MCF 10A (cell line): ENCODE measurements at regions of chr18 and their contacts with region 1.

Region 1: DNA sequence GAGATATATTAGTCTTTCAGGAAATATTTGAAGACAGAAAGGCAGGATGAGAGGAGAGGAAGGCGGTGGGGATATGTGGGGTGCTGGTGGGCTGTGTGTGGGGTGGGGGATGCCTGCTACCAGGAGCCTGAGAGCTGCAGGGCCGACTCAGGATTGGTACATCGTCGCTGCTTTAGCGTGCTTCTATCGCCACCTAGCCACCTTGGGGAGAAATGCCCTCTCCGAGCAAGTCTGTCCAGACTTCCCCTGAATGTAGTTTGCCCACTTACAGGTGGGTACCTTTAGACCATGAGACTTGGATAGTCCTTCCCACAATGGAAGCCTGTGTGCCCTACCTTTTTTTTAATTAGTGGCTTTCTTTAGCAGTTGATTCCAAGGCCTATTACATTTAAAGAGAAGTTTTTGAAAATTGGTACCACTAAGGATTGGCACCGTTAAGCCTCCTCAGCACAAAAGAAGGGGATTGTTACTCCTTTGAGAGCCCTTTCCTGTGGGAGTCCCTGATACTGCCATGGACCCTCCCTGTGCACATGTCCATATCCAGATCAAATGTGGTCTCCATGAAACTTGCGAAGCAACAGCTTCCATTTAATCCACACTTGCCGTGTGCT is 114.1 kb upstream of the NDUFV2 start:
- DNase-seq: peak; percentile 70
- H3K4me3 Mint-ChIP-seq: no peak overlapping the region
- H3K27ac Mint-ChIP-seq: no peak overlapping the region
- H3K4me1 Mint-ChIP-seq: peaks cover 23% of the 10 kb centered on the region
- H3K27me3 Mint-ChIP-seq: no peaks in the 10 kb centered on the region
- CTCF ChIP-seq: peak; percentile 92

Region 2: GRCh38 chr18:8654503-8655451 is 333.6 kb before region 1 on chr18:
- CTCF ChIA-PET with region 1: interaction called, 94 read pairs
- POLR2A ChIA-PET with region 1: interaction called, 17 read pairs
- intact Hi-C with region 1: loop called (anchors 1 kb)
- DNase-seq: peak; percentile 40
- H3K4me3 Mint-ChIP-seq: no peak overlapping the region
- H3K27ac Mint-ChIP-seq: no peak overlapping the region
- H3K4me1 Mint-ChIP-seq: peaks cover 10% of the 10 kb centered on the region
- H3K27me3 Mint-ChIP-seq: peaks cover 14% of the 10 kb centered on the region
- CTCF ChIP-seq: peak; percentile 71

Region 3: GRCh38 chr18:8673256-8674209 is 314.8 kb before region 1 on chr18:
- CTCF ChIA-PET with region 1: interaction called, 11 read pairs
- POLR2A ChIA-PET with region 1: interaction called, 3 read pairs
- intact Hi-C with region 1: no loop called
- DNase-seq: no peak
- H3K4me3 Mint-ChIP-seq: no peak overlapping the region
- H3K27ac Mint-ChIP-seq: no peak overlapping the region
- H3K4me1 Mint-ChIP-seq: no peaks in the 10 kb centered on the region
- H3K27me3 Mint-ChIP-seq: no peaks in the 10 kb centered on the region
- CTCF ChIP-seq: no peak

Region 4: GRCh38 chr18:8696749-8697211 is 291.6 kb before region 1 on chr18:
- CTCF ChIA-PET with region 1: interaction called, 56 read pairs
- POLR2A ChIA-PET with region 1: interaction called, 4 read pairs
- intact Hi-C with region 1: no loop called
- DNase-seq: peak; percentile 63
- H3K4me3 Mint-ChIP-seq: no peak overlapping the region
- H3K27ac Mint-ChIP-seq: no peak overlapping the region
- H3K4me1 Mint-ChIP-seq: peaks cover 4% of the 10 kb centered on the region
- H3K27me3 Mint-ChIP-seq: no peaks in the 10 kb centered on the region
- CTCF ChIP-seq: peak; percentile 61

Region 5: DNA sequence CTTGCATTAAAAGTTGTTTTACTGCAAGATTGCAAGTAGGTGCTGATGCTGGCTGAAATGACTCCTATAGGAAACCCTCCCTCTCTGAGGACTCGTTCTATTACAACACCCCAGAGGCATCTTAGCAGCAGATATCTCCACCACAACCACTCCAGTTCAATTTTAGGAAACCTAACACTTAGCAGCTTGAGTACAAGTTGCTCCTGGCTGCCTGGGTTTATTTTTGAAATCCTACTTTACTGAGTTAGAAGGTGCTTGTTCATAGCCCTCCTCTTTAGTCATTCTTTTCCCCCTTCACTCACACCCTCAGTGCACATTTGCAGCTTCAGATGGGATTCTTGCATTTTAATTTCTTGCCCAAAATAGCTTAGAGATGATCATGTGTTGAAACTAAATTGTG is 171.6 kb before region 1 on chr18:
- CTCF ChIA-PET with region 1: no interaction called
- POLR2A ChIA-PET with region 1: no interaction called
- intact Hi-C with region 1: no loop called
- DNase-seq: no peak
- H3K4me3 Mint-ChIP-seq: no peak overlapping the region
- H3K27ac Mint-ChIP-seq: no peak overlapping the region
- H3K4me1 Mint-ChIP-seq: peaks cover 20% of the 10 kb centered on the region
- H3K27me3 Mint-ChIP-seq: no peaks in the 10 kb centered on the region
- CTCF ChIP-seq: no peak

Region 6: DNA sequence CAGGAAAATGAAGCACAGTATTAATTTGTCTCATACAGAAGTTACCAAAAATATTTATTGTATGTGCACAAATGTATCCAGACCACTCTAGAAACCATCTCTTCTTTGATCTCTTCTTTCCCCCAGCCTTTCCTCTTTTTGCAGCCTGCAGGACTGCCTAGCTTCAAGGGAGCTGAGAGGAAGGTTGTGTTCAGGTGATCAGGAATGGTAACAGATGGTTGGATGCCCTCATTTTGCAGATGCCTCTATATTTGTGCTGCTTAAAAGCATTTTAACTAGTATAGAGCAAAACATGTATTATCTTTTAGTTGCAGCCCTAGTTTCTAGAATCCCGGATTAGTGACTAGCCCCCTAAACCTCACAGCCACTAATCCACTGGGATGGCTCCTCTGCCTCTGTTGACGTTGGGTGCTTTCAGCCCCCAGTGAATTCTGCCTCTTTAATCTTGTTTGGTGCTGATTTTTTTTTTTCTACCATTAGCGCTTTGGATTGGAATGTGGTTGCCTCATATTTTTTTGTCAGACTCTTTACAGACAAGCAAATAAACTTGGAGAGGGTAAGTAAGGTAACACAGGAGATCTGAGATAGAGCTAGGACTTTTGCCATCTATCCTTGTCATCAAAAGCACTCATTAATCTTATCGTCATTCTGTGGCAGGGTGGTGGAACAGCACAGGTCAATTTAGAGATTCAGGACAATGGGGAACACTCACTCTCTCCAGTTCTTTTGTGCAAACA is 10.3 kb after region 1 on chr18:
- CTCF ChIA-PET with region 1: interaction called, 27 read pairs
- POLR2A ChIA-PET with region 1: interaction called, 3 read pairs
- intact Hi-C with region 1: no loop called
- DNase-seq: no peak
- H3K4me3 Mint-ChIP-seq: no peak overlapping the region
- H3K27ac Mint-ChIP-seq: no peak overlapping the region
- H3K4me1 Mint-ChIP-seq: peaks cover 16% of the 10 kb centered on the region
- H3K27me3 Mint-ChIP-seq: no peaks in the 10 kb centered on the region
- CTCF ChIP-seq: no peak

Region 7: DNA sequence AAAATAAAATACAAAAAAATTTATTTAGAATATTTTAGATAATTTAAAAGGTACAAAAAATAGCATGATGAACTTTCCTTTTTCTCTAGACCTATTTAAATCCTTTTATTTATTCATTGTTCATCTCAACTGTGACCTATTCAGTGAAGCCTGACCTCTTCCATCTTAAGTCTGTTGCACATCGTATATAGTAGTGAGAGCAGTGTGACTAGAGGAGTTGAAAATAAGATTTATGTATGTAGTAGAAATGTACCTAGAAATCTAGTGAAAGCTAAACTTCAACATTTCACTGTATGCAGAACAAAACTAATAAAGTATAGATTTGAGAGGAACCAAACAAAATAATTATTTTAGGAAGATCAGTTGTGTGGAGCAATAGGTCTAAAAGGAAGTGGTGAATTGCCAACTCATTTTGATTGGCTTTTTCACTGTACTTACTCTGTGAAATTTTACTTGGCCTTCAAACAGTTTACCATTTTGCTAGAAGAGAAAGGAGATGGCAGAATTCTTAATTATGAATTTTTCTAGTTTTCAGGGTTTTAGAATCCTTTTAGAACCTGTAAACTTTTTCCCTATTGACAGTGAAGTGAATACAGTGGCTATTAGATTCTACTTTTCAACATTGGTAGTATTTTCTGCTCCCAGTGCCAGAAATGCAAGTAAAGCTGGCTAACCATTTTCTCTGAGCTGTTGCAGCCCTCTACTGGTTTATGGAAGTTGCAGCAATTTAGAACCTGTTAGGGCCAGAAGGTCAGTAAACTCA is 159.3 kb after region 1 on chr18:
- CTCF ChIA-PET with region 1: interaction called, 3 read pairs
- POLR2A ChIA-PET with region 1: no interaction called
- intact Hi-C with region 1: loop called (anchors 2 kb)
- DNase-seq: peak; percentile 79
- H3K4me3 Mint-ChIP-seq: no peak overlapping the region
- H3K27ac Mint-ChIP-seq: peak overlapping the region; percentile 66
- H3K4me1 Mint-ChIP-seq: peaks cover 29% of the 10 kb centered on the region
- H3K27me3 Mint-ChIP-seq: no peaks in the 10 kb centered on the region
- CTCF ChIP-seq: peak; percentile 66

Region 8: DNA sequence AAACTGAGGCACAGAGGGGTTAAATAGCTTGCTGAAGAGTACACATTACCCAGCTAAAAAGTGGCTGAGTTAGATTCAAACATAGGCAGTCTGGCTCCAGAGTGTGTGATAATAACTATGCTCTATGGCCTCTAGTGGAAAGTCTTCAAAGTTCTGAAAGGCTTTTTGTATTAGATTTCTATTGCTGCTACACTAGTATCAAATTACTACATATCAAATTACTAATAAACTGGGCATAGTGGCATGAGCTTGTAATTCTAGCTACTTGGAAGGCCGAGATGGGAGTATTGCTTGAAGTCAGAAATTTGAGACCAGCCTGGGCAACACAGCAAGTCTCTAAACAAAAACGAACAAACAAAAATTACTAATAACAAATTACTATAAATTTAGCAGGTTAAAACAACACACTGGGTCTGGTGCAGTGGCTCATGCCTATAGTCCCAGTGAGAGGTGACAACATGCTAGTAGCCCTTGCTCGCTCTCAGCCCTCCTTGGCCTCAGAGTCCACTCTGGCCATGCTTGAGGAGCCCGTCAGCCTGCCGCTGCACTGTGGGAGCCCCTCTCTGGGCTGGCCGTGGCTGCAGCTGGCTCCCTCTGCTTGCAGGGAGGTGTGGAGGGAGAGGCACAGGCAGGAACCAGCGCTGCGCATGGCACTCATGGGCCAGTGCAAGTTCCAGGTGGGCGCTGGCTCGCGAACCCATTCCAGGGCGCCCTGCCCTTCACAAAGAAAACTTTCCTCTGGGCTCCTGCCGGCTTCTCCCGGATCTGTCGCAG is 308.1 kb after region 1 on chr18:
- CTCF ChIA-PET with region 1: no interaction called
- POLR2A ChIA-PET with region 1: no interaction called
- intact Hi-C with region 1: no loop called
- DNase-seq: no peak
- H3K4me3 Mint-ChIP-seq: no peak overlapping the region
- H3K27ac Mint-ChIP-seq: no peak overlapping the region
- H3K4me1 Mint-ChIP-seq: no peaks in the 10 kb centered on the region
- H3K27me3 Mint-ChIP-seq: no peaks in the 10 kb centered on the region
- CTCF ChIP-seq: no peak